Activated CD4-positive, alpha-beta T cell treated with anti-CD3 and anti-CD28 coated beads, Interleukin-2, amount 10 ng/mL, durations not matched to agents 24 days and 14 days (primary cell): ENCODE measurements at regions of chr6 and their contacts with region 1.

Region 1: GRCh38 chr6:159062564-159062945 is 17.8 kb upstream of the TAGAP start:
- DNase-seq: peak; percentile 92
- H3K4me3 Mint-ChIP-seq: peak overlapping the region; percentile 62
- H3K27ac Mint-ChIP-seq: peak overlapping the region; percentile 94
- H3K4me1 Mint-ChIP-seq: peaks cover 83% of the 10 kb centered on the region
- H3K27me3 Mint-ChIP-seq: no peaks in the 10 kb centered on the region

Region 2: DNA sequence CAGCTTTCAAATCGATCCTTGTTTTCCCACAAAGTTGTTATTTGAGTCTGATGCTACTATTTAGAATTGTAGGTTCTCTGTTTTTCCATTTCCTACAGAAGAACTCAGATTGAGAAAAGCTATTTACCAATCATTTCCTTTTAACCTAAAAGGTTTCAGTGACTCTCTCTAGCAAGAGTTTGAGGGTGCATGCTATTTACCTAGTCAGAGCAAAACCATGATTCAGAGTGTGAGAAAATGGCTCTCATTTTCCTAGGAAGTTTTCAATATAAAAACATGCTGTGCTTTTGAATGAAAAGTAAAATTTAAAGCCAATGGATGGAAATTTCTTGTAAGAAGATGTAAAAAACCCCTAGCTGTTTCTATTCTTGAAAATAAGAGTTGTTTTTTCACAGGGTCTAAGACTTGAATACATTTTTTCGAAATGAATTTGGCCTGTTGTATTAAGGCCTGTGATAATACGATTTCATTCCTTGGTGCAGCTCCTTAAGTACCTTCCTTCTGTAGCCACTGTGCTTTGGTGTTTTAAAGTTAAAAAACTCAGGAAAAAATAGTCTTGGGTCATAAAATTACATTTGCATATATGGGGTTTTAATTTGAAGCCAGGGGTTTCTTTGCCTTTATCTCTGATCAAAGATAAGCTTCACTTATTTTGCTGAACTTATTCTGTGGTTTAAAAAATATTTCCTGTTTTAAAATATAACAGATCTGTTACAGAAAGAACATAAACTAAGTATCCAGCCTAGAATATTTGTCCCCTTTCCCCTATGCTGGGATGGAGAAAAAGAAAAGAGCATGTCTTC is 44.6 kb before region 1 on chr6:
- intact Hi-C with region 1: loop called (anchors 1 kb)
- DNase-seq: no peak
- H3K4me3 Mint-ChIP-seq: peak overlapping the region; percentile 45
- H3K27ac Mint-ChIP-seq: peak overlapping the region; percentile 79
- H3K4me1 Mint-ChIP-seq: peaks cover 42% of the 10 kb centered on the region
- H3K27me3 Mint-ChIP-seq: no peaks in the 10 kb centered on the region

Region 3: GRCh38 chr6:159077123-159077522 is 14.6 kb after region 1 on chr6:
- intact Hi-C with region 1: loop called (anchors 1 kb)
- DNase-seq: no peak
- H3K4me3 Mint-ChIP-seq: peak overlapping the region; percentile 20
- H3K27ac Mint-ChIP-seq: peak overlapping the region; percentile 79
- H3K4me1 Mint-ChIP-seq: peaks cover 31% of the 10 kb centered on the region
- H3K27me3 Mint-ChIP-seq: no peaks in the 10 kb centered on the region

Region 4: GRCh38 chr6:159098636-159099106 is 36.1 kb after region 1 on chr6:
- intact Hi-C with region 1: loop called (anchors 1 kb)
- DNase-seq: peak; percentile 90
- H3K4me3 Mint-ChIP-seq: peak overlapping the region; percentile 77
- H3K27ac Mint-ChIP-seq: peak overlapping the region; percentile 99
- H3K4me1 Mint-ChIP-seq: peaks cover 76% of the 10 kb centered on the region
- H3K27me3 Mint-ChIP-seq: no peaks in the 10 kb centered on the region